ENCODE measurements at regions of chr3 and their contacts with region 1.

Region 1: DNA sequence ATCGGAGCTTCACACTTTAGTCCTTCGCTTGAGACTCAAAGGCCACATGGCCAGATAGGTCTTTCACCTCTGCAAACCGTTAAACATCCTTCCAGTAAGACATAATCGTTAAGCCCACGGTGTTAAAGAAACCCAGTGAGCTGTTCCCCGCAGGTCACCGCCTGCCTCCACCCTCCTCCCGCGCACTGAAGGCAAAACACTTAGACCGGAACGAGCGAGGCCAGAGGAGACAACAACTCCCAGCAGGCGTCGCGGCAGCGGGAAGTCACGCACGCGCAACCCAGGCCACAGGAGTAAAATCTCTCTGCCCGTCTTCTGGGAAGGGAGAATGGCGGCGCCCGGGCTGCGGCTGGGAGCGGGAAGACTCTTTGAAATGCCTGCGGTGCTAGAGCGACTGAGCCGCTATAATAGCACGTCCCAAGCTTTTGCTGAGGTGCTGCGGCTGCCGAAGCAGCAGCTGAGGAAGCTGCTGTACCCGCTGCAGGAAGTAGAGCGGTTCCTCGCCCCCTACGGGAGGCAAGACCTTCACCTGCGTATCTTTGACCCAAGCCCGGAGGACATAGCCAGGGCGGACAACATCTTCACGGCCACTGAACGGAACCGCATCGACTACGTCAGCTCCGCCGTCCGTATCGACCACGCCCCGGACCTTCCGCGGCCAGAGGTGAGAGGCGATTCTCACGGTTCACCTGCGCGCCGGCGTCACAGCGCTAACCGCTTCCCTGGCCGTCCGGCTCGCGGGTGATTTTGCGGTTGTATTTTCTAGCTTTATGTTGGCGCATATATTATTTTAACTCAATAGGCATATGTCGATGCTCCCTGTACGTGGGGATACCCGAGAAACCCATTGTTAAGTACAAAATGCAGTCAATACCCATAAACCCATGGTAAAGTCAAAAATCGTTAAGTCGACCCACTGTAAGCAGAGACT is at the start of gene GTPBP8:
- DNase-seq: peak; percentile 79 to 88 (median 81)
- H3K4me3 ChIP-seq: peak within 1 kb of the TSS; percentile 73 to 91
- H3K4me3 Mint-ChIP-seq: peak within 1 kb of the TSS; percentile 95 to 98 (median 96)
- H3K27ac ChIP-seq: peak within 1 kb of the TSS; percentile 78
- H3K27ac Mint-ChIP-seq: peak within 1 kb of the TSS; percentile 94 to 98 (median 96)
- H3K4me1 ChIP-seq: peaks cover 49% of the 10 kb centered on the region
- H3K4me1 Mint-ChIP-seq: peaks cover 51 to 80% (median 62%) of the 10 kb centered on the region in 4 donors
- H3K27me3 ChIP-seq: no peaks in the 10 kb centered on the region
- H3K27me3 Mint-ChIP-seq: no peaks in the 10 kb centered on the region
- total RNA-seq, gene GTPBP8: 36.0 to 40.0 TPM

Region 2: GRCh38 chr3:113002679-113003078 is 11.7 kb after region 1 on chr3:
- CTCF ChIA-PET with region 1: interaction called, 14 read pairs
- POLR2A ChIA-PET with region 1: interaction called, 76 read pairs
- intact Hi-C with region 1: loop called (anchors 1 kb)
- DNase-seq: peak; percentile 26 to 66 (median 29)
- H3K4me3 ChIP-seq: no peak overlapping the region
- H3K4me3 Mint-ChIP-seq: peak overlapping the region in 4 of 8 donors; percentile 11 to 57 (median 23)
- H3K27ac ChIP-seq: peak overlapping the region; percentile 29
- H3K27ac Mint-ChIP-seq: peak overlapping the region; percentile 75 to 89 (median 84)
- H3K4me1 ChIP-seq: peaks cover 66% of the 10 kb centered on the region
- H3K4me1 Mint-ChIP-seq: peaks cover 45 to 64% (median 55%) of the 10 kb centered on the region in 4 donors
- H3K27me3 ChIP-seq: no peaks in the 10 kb centered on the region
- H3K27me3 Mint-ChIP-seq: no peaks in the 10 kb centered on the region

Measured in CD4-positive, alpha-beta memory T cell (primary cell).